ENCODE measurements at regions of chr1 and their contacts with region 1.

Region 1: DNA sequence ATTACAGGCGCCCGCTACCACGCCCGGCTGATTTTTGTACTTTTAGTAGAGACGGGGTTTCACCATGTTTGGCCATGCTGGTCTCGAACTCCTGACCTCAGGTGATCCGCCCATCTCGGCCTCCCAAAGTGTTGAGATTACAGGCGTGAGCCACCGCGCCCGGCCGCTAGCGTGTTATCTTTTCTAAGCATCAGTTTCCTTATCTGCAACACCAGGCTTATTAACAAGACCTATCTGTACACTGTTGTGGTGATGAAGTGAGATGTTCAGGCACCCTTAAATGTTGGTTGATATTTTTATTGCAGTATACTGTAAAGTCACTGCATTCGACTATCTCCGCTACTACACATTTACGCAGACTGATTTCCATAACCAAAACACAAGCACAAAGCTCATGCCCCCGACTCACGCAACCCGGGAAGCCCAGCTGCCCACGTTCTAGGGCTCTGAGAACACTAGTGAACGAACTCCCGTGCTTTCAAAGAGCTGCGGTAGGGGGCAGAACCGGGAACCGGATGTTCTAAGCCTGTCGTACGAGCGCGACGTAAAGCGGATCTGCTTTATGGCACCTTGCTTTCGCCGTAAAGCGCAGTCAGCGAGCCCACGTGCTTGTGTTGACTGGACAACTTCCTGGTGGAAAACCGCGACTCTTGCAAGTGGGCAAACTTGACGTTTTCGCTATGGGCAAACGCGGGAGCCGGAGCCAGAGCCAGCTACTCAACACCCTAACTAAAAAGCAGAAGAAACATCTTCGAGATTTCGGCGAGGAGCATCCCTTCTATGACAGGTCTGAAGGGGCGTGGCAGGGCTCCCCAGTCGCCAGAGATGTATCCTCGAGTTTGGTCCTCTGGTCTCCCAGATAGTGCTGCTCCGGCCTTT is at the start of gene UTP25:
- DNase-seq: peak; percentile 96
- ATAC-seq: peak; percentile 86
- H3K4me3 Mint-ChIP-seq: peak within 1 kb of the TSS; percentile 87
- H3K27ac Mint-ChIP-seq: peak within 1 kb of the TSS; percentile 92
- H3K4me1 Mint-ChIP-seq: peaks cover 45% of the 10 kb centered on the region
- H3K27me3 Mint-ChIP-seq: peaks cover 4% of the 10 kb centered on the region
- total RNA-seq, gene UTP25: 9.4 to 10.4 TPM

Region 2: GRCh38 chr1:209692745-209693504 is 134.7 kb before region 1 on chr1:
- CTCF ChIA-PET with region 1: no interaction called
- POLR2A ChIA-PET with region 1: no interaction called
- intact Hi-C with region 1: loop called in 1 of 2 experiments (anchors 5 kb)
- DNase-seq: peak; percentile 88
- ATAC-seq: peak; percentile 68
- H3K4me3 Mint-ChIP-seq: no peak overlapping the region
- H3K27ac Mint-ChIP-seq: peak overlapping the region; percentile 43
- H3K4me1 Mint-ChIP-seq: peaks cover 40% of the 10 kb centered on the region
- H3K27me3 Mint-ChIP-seq: no peaks in the 10 kb centered on the region

Region 3: GRCh38 chr1:209761011-209761635 is 66.5 kb before region 1 on chr1:
- CTCF ChIA-PET with region 1: interaction called, 12 read pairs
- POLR2A ChIA-PET with region 1: interaction called, 5 read pairs
- intact Hi-C with region 1: loop called (anchors 1 to 2 kb)
- DNase-seq: no peak
- ATAC-seq: no peak
- H3K4me3 Mint-ChIP-seq: no peak overlapping the region
- H3K27ac Mint-ChIP-seq: peak overlapping the region; percentile 79
- H3K4me1 Mint-ChIP-seq: peaks cover 71% of the 10 kb centered on the region
- H3K27me3 Mint-ChIP-seq: no peaks in the 10 kb centered on the region

Region 4: DNA sequence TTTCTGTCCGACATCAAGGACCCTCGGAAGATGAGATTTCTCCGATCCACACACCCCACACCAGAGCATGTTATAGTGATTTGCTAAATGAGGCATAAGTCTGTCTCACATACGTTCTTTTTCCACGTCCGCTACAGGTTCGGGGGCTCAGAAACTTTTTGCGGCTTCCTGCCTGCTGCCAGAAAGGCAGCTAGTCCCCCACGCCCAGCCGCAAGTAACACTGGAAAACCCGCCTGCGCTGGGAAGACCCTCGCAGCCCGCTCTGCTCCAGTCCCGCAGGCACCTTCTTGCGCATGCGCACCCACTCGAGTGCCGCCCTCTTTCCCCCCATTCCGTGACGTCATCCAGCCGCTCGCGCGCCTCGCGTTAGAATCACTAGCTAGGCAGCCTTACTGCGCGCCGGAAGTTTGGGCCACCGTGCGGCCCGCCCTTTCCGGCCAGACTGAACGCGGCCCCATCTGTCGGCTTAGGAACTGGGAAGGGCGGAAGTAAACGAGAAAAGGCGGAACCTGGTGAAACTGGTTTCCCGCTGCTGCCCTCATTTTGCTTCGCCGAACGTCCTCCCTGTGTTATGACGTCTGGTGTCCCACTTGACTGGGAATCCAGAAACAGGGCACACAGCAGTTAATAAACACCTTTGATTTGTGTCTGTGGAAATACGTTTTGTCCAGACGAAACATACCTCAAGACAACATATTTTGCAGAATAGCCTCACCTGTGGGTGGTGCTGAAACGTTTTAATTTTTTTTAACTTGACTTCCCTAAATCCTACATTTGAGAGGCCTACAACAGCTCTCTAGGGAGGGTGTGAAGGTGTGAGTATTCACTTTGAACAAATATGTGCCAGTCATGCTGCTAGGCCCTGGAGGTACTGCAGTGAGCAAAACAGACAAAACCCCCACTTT is 43.1 kb before region 1 on chr1 and contains the start of gene C1orf74:
- CTCF ChIA-PET with region 1: interaction called, 21 read pairs
- POLR2A ChIA-PET with region 1: interaction called, 6 read pairs
- intact Hi-C with region 1: loop called (anchors 1 kb)
- DNase-seq: peak; percentile 100
- ATAC-seq: peak; percentile 99
- H3K4me3 Mint-ChIP-seq: peak within 1 kb of the TSS; percentile 89
- H3K27ac Mint-ChIP-seq: peak within 1 kb of the TSS; percentile 97
- H3K4me1 Mint-ChIP-seq: peaks cover 30% of the 10 kb centered on the region
- H3K27me3 Mint-ChIP-seq: no peaks in the 10 kb centered on the region
- total RNA-seq, gene C1orf74: 3.7 to 4.3 TPM

Region 5: DNA sequence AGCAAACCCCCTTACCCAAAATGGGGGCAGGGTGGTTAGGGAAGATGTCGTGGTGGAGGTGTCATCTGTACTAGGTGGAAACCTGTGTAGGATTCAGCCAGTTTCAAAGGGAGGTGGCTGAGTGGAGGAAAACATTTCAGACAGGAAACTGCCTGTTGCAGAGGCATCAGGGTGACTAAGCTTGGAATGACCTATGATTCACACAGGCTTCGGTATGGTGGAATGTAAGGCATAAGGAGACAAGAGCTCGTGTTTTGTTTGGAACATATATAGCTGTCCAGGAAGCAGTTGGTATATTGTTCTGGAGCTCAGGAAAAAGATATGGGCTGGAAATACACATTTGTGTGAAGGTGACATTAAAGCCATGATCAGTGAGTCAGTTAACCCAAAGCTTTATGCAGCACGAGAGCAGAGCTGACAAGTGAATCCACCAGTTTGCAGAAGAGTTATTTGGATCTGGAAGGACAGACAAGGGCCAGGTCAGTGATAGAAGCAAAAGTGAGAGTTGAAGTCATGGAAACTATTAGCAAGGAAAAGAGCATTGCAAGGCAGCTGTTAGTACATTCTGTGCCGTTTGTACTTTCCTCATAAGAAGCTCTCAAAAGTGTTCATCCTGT is 12.4 kb after region 1 on chr1:
- CTCF ChIA-PET with region 1: interaction called, 29 read pairs
- POLR2A ChIA-PET with region 1: interaction called, 4 read pairs
- intact Hi-C with region 1: no loop called
- DNase-seq: peak; percentile 29
- ATAC-seq: peak; percentile 77
- H3K4me3 Mint-ChIP-seq: no peak overlapping the region
- H3K27ac Mint-ChIP-seq: peak overlapping the region; percentile 72
- H3K4me1 Mint-ChIP-seq: peaks cover 46% of the 10 kb centered on the region
- H3K27me3 Mint-ChIP-seq: no peaks in the 10 kb centered on the region

Region 6: DNA sequence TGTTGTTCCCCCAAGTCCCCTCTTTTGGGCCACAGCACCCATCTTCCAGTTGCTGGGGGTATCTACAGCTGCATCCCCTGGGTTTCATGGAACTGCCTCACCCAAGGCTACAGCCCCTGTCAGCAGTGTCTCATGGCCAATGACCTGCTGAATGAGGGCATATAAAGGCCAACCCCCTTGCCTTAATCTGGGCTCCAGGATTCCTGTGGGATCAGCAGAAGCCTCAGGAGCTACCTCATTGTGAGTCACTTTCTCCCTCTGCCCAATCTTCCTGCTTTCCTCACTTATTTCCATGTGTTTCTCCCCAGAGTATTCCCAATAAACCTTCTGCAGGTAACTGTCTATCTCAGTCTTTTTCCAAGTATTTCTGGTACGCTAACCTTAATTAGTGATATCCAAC is 73.1 kb after region 1 on chr1:
- CTCF ChIA-PET with region 1: no interaction called
- POLR2A ChIA-PET with region 1: no interaction called
- intact Hi-C with region 1: no loop called
- DNase-seq: no peak
- ATAC-seq: no peak
- H3K4me3 Mint-ChIP-seq: no peak overlapping the region
- H3K27ac Mint-ChIP-seq: no peak overlapping the region
- H3K4me1 Mint-ChIP-seq: peaks cover 4% of the 10 kb centered on the region
- H3K27me3 Mint-ChIP-seq: peaks cover 6% of the 10 kb centered on the region

Region 7: DNA sequence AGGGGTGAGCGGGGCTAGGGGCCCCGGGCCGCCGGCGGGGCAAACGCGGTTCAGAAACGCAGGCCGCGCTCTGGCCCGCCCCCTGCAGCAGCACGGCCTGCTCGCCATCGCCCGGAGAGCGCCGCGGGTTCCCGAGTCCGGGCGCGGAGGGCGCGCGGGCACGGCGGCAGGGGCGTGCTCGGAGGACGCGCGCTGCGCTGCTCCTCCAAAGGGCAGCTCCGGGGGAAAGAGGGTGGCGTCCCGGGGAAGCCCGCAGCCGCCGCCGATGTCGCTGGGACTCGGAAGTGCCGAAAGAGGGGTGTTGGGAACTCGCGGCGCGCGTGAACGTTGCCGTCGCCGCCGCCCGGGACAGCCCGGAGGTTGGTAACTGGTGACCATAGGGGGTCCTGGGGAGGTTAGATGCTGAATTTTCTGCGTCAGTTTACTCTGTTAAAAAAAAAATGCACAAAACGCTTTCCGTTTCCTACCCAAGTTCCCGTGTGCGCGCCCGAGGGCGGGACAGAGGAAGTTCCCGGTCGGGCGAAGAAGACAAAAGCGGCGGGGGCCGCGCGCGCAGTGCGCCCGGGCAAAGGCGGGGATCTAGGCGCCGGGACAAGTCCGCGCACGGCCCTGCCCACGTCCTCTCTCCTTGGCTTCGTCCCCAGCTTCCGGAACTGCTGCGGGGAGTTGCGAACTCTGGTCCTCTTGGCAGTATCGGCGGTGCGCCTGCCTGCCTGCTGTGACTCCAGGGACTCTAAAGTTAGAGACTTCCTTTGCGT is 501.3 kb after region 1 on chr1 and contains the start of gene HHAT:
- CTCF ChIA-PET with region 1: interaction called, 4 read pairs
- POLR2A ChIA-PET with region 1: no interaction called
- intact Hi-C with region 1: loop called in 1 of 2 experiments (anchors 1 kb)
- DNase-seq: peak; percentile 80
- ATAC-seq: peak; percentile 34
- H3K4me3 Mint-ChIP-seq: peak within 1 kb of the TSS; percentile 82
- H3K27ac Mint-ChIP-seq: peak within 1 kb of the TSS; percentile 95
- H3K4me1 Mint-ChIP-seq: peaks cover 36% of the 10 kb centered on the region
- H3K27me3 Mint-ChIP-seq: peaks cover 3% of the 10 kb centered on the region
- total RNA-seq, gene HHAT: 0.82 to 0.84 TPM